K562 (cell line): ENCODE measurements at regions of chr3 and their contacts with region 1.

Region 1: DNA sequence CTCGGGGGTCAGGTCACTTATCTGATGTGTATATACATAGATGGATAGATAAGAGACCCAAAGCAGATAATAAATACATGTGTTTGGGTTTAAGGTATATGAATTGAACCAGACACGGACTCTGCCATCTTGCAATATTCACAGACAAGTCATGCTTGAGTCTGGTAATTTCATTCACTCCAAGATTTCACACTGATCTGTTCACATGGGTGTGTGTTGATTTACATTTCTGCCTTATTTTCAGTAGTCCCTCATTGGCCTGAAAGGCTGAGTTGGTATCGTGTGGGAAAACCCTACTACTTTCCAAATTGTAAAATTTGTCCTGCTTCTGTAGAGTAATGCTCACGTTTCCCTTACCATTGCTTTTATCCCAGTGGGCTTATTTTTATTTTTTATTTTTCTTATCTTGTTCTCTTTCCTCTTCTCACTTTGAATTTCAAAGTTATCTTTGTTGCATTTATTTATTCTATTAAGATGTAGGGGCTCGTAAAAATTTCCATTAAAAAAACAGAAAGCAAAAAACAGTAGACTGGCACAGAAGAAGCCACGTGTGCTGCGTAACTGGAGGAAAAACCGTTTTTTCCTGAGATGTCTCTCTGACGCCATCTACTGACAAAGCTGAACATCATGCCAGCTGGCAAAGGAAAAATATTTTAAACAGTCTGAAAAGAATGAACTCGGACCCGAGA is 10.8 kb upstream of the MFSD1 start:
- DNase-seq: peak; percentile 45 to 78 (median 52)
- ATAC-seq: peak; percentile 69
- H3K4me3 ChIP-seq: no peak overlapping the region
- H3K27ac ChIP-seq: peak overlapping the region; percentile 55; the same call in 2 of the 3 replicates
- H3K4me1 ChIP-seq: peaks cover 0 to 7% of the 10 kb centered on the region in 2 experiments; a peak in 2 of 5 replicates
- H3K27me3 ChIP-seq: no peaks in the 10 kb centered on the region
- CTCF ChIP-seq: peak; percentile 75 to 90 (median 77)
- EP300 ChIP-seq: peak; percentile 19; the same call in 1 of the 2 replicates
- POLR2A ChIP-seq: no peak
- RAD21 ChIP-seq: peak; percentile 82 to 86

Region 2: DNA sequence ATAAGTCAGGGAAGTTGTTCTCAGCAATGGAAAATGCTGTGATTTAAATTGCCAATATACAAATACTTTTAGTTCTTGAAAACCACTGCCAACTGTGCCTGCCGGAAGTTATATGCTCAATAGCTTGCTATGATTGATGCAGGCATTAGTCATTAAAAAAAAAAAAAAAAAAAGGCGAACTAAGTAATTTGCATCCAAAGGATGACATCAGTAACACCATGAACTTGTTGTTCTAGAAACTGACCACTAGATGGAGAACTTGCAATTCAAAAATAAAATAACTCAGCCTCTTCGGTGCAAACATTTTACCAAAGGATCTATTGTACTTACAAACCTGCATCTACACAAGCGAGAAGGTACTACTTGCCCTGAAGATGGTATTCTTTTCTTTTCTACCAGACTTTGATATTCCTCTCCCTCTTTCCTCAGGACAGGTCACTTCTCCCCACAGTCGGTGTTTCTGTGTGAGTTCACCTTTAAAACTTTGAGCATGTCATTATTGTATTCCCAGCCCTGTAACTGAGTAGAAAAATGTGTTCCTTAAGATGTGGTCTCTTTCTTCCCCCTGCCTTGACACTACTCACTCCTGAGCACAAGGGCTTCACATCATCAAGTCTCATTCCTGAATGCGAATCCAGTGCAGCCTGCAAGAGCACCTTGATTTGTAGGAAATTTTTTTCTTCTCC is 1172.8 kb before region 1 on chr3:
- CTCF ChIA-PET with region 1: no interaction called
- POLR2A ChIA-PET with region 1: no interaction called
- in situ Hi-C with region 1: loop called (anchors 25 kb)
- intact Hi-C with region 1: loop called (anchors 5 kb)
- DNase-seq: peak; percentile 57 to 70 (median 66)
- ATAC-seq: peak; percentile 78
- H3K4me3 ChIP-seq: no peak overlapping the region
- H3K27ac ChIP-seq: no peak overlapping the region
- H3K4me1 ChIP-seq: no peaks in the 10 kb centered on the region
- H3K27me3 ChIP-seq: peaks cover 0 to 6% of the 10 kb centered on the region in 2 experiments; a peak in 3 of 5 replicates
- CTCF ChIP-seq: peak; percentile 29 to 74 (median 60); a peak in 5 of 6 replicates
- EP300 ChIP-seq: no peak
- POLR2A ChIP-seq: no peak
- RAD21 ChIP-seq: peak; percentile 59 to 71

Region 3: DNA sequence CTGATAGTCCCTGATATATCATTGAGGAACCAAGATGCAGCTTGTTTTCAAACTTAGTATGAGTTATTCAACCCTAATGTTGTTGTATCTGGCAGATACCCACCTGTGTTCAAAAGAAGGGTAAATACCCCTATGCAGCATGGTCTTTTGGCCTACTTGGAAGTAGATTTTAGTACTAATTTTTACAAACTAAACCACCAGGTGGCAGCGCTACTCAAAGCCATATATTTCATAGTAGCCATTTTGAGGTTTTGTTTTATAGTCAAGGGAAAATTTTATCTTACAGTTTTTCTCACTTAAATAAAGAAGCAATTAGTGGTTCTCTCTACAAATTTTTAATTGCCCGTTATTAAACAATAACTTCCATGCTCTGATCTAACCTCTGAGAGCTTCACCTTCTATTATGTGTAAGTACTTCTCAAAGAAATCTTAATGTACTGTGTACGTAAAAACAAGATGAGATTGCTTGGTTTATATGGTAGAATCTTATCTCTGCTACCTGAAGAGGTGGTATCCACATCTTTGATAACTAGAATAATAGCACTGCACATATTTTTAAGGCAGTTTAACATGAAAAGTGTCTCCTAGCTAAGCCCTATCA is 251.5 kb before region 1 on chr3:
- CTCF ChIA-PET with region 1: interaction called, 14 read pairs
- POLR2A ChIA-PET with region 1: no interaction called
- in situ Hi-C with region 1: no loop called
- intact Hi-C with region 1: loop called (anchors 2 kb)
- DNase-seq: peak; percentile 18 to 61 (median 26)
- ATAC-seq: peak; percentile 79
- H3K4me3 ChIP-seq: no peak overlapping the region
- H3K27ac ChIP-seq: no peak overlapping the region
- H3K4me1 ChIP-seq: no peaks in the 10 kb centered on the region
- H3K27me3 ChIP-seq: no peaks in the 10 kb centered on the region
- CTCF ChIP-seq: peak; percentile 35 to 63 (median 48); a peak in 4 of 6 replicates
- EP300 ChIP-seq: no peak
- POLR2A ChIP-seq: no peak
- RAD21 ChIP-seq: peak; percentile 47 to 67; a peak in 3 of 4 replicates

Region 4: GRCh38 chr3:158659454-158660237 is 131.4 kb before region 1 on chr3:
- CTCF ChIA-PET with region 1: interaction called, 31 read pairs
- POLR2A ChIA-PET with region 1: interaction called, 4 read pairs
- in situ Hi-C with region 1: loop called (anchors 5 kb)
- intact Hi-C with region 1: loop called (anchors 1 kb)
- DNase-seq: peak; percentile 58 to 70 (median 60)
- ATAC-seq: peak; percentile 91
- H3K4me3 ChIP-seq: no peak overlapping the region
- H3K27ac ChIP-seq: no peak overlapping the region
- H3K4me1 ChIP-seq: no peaks in the 10 kb centered on the region
- H3K27me3 ChIP-seq: no peaks in the 10 kb centered on the region
- CTCF ChIP-seq: peak; percentile 61 to 85 (median 70)
- EP300 ChIP-seq: no peak
- POLR2A ChIP-seq: no peak
- RAD21 ChIP-seq: peak; percentile 74 to 77

Region 5: GRCh38 chr3:158845765-158846350 is 54.8 kb after region 1 on chr3:
- CTCF ChIA-PET with region 1: no interaction called
- POLR2A ChIA-PET with region 1: no interaction called
- in situ Hi-C with region 1: no loop called
- intact Hi-C with region 1: loop called (anchors 2 kb)
- DNase-seq: peak; percentile 64 to 70 (median 70)
- ATAC-seq: peak; percentile 86
- H3K4me3 ChIP-seq: no peak overlapping the region
- H3K27ac ChIP-seq: no peak overlapping the region
- H3K4me1 ChIP-seq: no peaks in the 10 kb centered on the region
- H3K27me3 ChIP-seq: peaks cover 4 to 22% of the 10 kb centered on the region in 2 experiments; a peak in 3 of 5 replicates
- CTCF ChIP-seq: peak; percentile 68 to 80 (median 69)
- EP300 ChIP-seq: no peak
- POLR2A ChIP-seq: no peak
- RAD21 ChIP-seq: peak; percentile 73 to 82